GM12878 (cell line): ENCODE measurements at regions of chr7 and their contacts with region 1.

Region 1: DNA sequence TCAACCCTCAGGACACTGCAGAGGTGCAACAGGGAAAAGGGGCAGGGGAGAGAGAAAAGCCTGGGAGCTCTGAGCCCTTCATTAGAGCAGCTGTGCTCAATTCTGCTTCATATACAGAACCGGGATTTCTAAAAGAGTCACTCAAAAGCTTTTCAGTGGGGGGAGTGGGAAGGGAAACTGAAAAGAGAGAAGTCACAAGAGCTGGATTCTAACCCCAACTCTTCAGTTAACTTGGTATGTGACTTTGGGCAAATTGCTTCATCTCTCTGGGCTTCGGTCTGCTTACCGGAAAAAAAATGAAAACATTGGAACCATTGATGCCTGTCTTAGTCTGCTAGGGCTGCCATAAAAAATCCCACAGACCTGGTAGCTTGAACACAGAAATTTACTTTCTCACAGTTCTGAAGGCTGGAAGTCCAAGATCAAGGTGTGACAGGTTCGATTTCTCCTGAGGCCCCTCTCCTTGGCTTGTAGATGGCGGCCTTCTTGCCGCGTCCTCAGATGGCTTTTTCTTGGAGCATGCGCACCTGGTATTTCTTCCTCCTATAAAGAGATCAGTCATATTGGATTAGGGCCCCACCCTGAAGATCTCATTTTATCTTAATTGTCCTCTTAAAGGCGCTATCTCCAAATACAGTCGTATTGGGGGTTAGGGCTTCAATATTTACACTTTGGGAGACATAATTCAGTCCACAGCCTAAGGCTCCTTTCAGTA is 118.3 kb upstream of the KMT2E start:
- DNase-seq: peak; percentile 83
- ATAC-seq: peak; percentile 55
- H3K4me3 ChIP-seq: peak overlapping the region; percentile 69
- H3K27ac ChIP-seq: peak overlapping the region; percentile 97
- H3K4me1 ChIP-seq: peaks cover 69% of the 10 kb centered on the region
- H3K27me3 ChIP-seq: no peaks in the 10 kb centered on the region
- CTCF ChIP-seq: no peak
- EP300 ChIP-seq: peak; percentile 58 to 60; a peak in 1 of 4 replicates
- POLR2A ChIP-seq: no peak
- RAD21 ChIP-seq: no peak

Region 2: DNA sequence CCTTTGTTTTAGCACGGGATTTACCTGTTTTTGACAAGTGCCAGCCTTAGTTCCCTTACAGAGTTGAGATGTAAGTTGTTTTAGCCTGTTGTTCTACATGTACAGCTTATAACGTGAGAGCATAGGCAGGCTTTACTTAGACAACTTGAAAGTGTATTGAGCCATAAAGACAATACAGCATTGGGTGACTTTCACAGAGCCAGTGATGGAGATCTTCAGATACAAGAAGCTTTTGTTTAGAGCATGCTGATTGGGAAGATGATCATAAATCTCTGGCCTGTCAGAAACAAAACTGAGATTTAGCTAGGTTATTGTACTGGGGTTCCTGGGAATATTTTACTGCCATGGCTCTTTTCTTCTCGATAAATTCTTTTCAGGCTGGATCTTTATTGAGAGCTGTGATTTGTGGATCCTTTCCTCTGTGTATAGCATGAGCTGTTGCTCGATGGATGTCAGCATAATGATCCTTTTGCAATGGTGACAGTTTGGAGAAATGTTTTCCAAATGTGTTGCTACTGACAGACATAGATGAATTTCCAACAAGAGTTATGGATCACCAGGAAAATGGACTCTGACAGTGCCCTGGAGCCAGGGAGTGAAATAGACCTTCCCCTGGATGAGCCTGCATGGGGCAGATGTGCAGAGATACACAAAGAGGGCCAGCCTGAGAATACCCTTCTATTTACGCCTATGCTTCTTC is 537.1 kb before region 1 on chr7:
- CTCF ChIA-PET with region 1: no interaction called
- POLR2A ChIA-PET with region 1: no interaction called
- RAD21 ChIA-PET with region 1: no interaction called
- SMC1A ChIA-PET with region 1: no interaction called
- in situ Hi-C with region 1: no loop called
- intact Hi-C with region 1: no loop called
- DNase-seq: no peak
- ATAC-seq: no peak
- H3K4me3 ChIP-seq: no peak overlapping the region
- H3K27ac ChIP-seq: no peak overlapping the region
- H3K4me1 ChIP-seq: no peaks in the 10 kb centered on the region
- H3K27me3 ChIP-seq: no peaks in the 10 kb centered on the region
- CTCF ChIP-seq: no peak
- EP300 ChIP-seq: no peak
- POLR2A ChIP-seq: no peak
- RAD21 ChIP-seq: no peak

Region 3: GRCh38 chr7:104650991-104651640 is 244.6 kb before region 1 on chr7:
- CTCF ChIA-PET with region 1: no interaction called
- POLR2A ChIA-PET with region 1: no interaction called
- RAD21 ChIA-PET with region 1: no interaction called
- SMC1A ChIA-PET with region 1: no interaction called
- in situ Hi-C with region 1: no loop called
- intact Hi-C with region 1: no loop called
- DNase-seq: no peak
- ATAC-seq: no peak
- H3K4me3 ChIP-seq: no peak overlapping the region
- H3K27ac ChIP-seq: no peak overlapping the region
- H3K4me1 ChIP-seq: no peaks in the 10 kb centered on the region
- H3K27me3 ChIP-seq: peaks cover 0 to 4% of the 10 kb centered on the region in 2 experiments; a peak in 2 of 4 replicates
- CTCF ChIP-seq: no peak
- EP300 ChIP-seq: no peak
- POLR2A ChIP-seq: no peak
- RAD21 ChIP-seq: no peak

Region 4: DNA sequence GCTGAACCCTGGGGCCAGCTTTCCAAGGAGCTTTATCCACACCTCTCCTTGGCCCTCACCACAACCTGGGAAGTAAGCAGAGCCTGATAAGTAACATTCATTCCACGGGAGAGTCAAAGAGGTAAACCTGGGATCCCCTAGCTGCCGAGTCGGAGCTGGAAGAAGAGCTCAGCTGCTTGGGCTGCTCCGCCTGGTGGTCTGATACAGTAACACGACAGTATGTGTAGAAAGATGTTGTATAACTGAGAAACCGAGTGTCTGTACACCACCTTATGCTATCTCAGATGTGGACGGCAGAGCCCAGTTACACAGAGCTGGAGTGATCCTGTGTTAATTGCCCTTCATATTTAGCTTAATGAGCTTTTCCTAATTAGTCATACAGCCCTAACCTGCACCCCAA is 33.0 kb before region 1 on chr7:
- CTCF ChIA-PET with region 1: interaction called, 3 read pairs
- POLR2A ChIA-PET with region 1: no interaction called
- RAD21 ChIA-PET with region 1: interaction called, 7 read pairs
- SMC1A ChIA-PET with region 1: interaction called, 20 read pairs
- in situ Hi-C with region 1: no loop called
- intact Hi-C with region 1: no loop called
- DNase-seq: no peak
- ATAC-seq: no peak; the same call in 2 of the 3 replicates
- H3K4me3 ChIP-seq: no peak overlapping the region
- H3K27ac ChIP-seq: no peak overlapping the region
- H3K4me1 ChIP-seq: peaks cover 8% of the 10 kb centered on the region
- H3K27me3 ChIP-seq: no peaks in the 10 kb centered on the region
- CTCF ChIP-seq: no peak
- EP300 ChIP-seq: no peak
- POLR2A ChIP-seq: no peak
- RAD21 ChIP-seq: no peak

Region 5: GRCh38 chr7:104878577-104878976 is 17.1 kb before region 1 on chr7:
- CTCF ChIA-PET with region 1: interaction called, 298 read pairs
- POLR2A ChIA-PET with region 1: interaction called, 25 read pairs
- RAD21 ChIA-PET with region 1: interaction called, 147 read pairs
- SMC1A ChIA-PET with region 1: interaction called, 236 read pairs
- in situ Hi-C with region 1: no loop called
- intact Hi-C with region 1: loop called (anchors 1 kb)
- DNase-seq: peak; percentile 65
- ATAC-seq: peak; percentile 90
- H3K4me3 ChIP-seq: peak overlapping the region; percentile 43; the same call in 1 of the 2 replicates
- H3K27ac ChIP-seq: peak overlapping the region; percentile 30; the same call in 1 of the 2 replicates
- H3K4me1 ChIP-seq: peaks cover 15% of the 10 kb centered on the region
- H3K27me3 ChIP-seq: no peaks in the 10 kb centered on the region
- CTCF ChIP-seq: no peak
- EP300 ChIP-seq: no peak
- POLR2A ChIP-seq: no peak
- RAD21 ChIP-seq: no peak

Region 6: GRCh38 chr7:104908636-104909035 is 13.0 kb after region 1 on chr7:
- CTCF ChIA-PET with region 1: interaction called, 581 read pairs
- POLR2A ChIA-PET with region 1: interaction called, 4 read pairs
- RAD21 ChIA-PET with region 1: interaction called, 4 read pairs
- SMC1A ChIA-PET with region 1: interaction called, 413 read pairs
- in situ Hi-C with region 1: no loop called
- intact Hi-C with region 1: no loop called
- DNase-seq: no peak
- ATAC-seq: no peak
- H3K4me3 ChIP-seq: no peak overlapping the region
- H3K27ac ChIP-seq: no peak overlapping the region
- H3K4me1 ChIP-seq: no peaks in the 10 kb centered on the region
- H3K27me3 ChIP-seq: no peaks in the 10 kb centered on the region
- CTCF ChIP-seq: no peak
- EP300 ChIP-seq: no peak
- POLR2A ChIP-seq: no peak
- RAD21 ChIP-seq: no peak

Region 7: GRCh38 chr7:104943502-104944343 is 48.0 kb after region 1 on chr7:
- CTCF ChIA-PET with region 1: interaction called, 3 read pairs
- POLR2A ChIA-PET with region 1: interaction called, 6 read pairs
- RAD21 ChIA-PET with region 1: interaction called, 17 read pairs
- SMC1A ChIA-PET with region 1: no interaction called
- in situ Hi-C with region 1: no loop called
- intact Hi-C with region 1: loop called (anchors 1 kb)
- DNase-seq: peak; percentile 83
- ATAC-seq: peak; percentile 75
- H3K4me3 ChIP-seq: peak overlapping the region; percentile 39; the same call in 1 of the 2 replicates
- H3K27ac ChIP-seq: peak overlapping the region; percentile 93
- H3K4me1 ChIP-seq: peaks cover 39% of the 10 kb centered on the region
- H3K27me3 ChIP-seq: no peaks in the 10 kb centered on the region
- CTCF ChIP-seq: no peak
- EP300 ChIP-seq: peak; percentile 90 to 91
- POLR2A ChIP-seq: peak; percentile 55
- RAD21 ChIP-seq: no peak

Region 8: GRCh38 chr7:105118612-105119600 is 223.2 kb after region 1 on chr7:
- CTCF ChIA-PET with region 1: no interaction called
- POLR2A ChIA-PET with region 1: no interaction called
- RAD21 ChIA-PET with region 1: no interaction called
- SMC1A ChIA-PET with region 1: no interaction called
- in situ Hi-C with region 1: no loop called
- intact Hi-C with region 1: no loop called
- DNase-seq: no peak
- ATAC-seq: peak; percentile 84
- H3K4me3 ChIP-seq: no peak overlapping the region
- H3K27ac ChIP-seq: 0 out of 2 replicates have a peak overlapping the region, but pooled peaks have one; percentile 4
- H3K4me1 ChIP-seq: peaks cover 9% of the 10 kb centered on the region
- H3K27me3 ChIP-seq: no peaks in the 10 kb centered on the region
- CTCF ChIP-seq: no peak
- EP300 ChIP-seq: no peak
- POLR2A ChIP-seq: no peak
- RAD21 ChIP-seq: no peak